ENCODE measurements at regions of chr16 and their contacts with region 1.

Region 1: DNA sequence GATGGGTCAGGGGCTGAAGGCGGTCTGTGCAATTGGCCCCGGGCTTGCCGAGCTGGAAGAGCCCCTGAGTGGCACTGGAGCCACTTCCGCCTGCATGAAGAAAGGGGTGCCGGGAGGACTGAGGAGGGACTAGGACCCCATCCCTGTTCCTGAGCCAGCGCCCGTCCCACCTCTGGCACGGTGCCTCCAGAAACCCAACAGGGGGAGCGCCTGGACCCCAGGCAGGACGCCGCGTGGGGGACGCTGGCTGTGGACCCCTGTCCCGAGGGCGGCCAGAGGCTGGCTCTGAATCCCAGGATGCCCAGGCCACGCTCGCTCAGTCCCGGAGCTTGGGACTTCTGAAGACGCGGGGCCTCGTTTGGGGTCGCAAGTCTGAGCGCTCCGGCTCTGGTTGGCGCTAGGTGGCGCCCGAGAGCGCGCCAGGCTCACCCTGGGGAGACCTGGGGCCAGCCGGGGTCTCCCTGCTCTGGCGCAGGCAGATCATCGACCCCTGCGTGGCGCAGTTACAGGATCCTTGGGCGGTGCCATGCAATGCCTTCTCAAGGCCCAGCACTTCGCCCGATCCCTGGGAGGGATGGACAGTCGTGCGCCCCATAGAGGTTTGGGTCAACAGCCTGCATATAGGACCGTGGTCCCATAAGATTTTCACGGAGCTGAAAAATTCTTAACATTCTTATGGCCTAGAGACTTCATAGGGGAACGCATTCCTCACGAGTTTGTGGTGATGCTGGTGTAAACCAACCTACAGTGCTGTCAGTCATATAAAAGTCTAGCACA is 58.5 kb upstream of the CREBBP start:
- DNase-seq: peak; percentile 59
- H3K4me3 ChIP-seq: peak overlapping the region; percentile 49
- CTCF ChIP-seq: peak; percentile 91

Region 2: GRCh38 chr16:3904875-3905274 is 34.2 kb before region 1 on chr16:
- CTCF ChIA-PET with region 1: no interaction called
- POLR2A ChIA-PET with region 1: no interaction called
- DNase-seq: no peak
- H3K4me3 ChIP-seq: no peak overlapping the region
- CTCF ChIP-seq: no peak

Region 3: GRCh38 chr16:3924763-3925162 is 14.3 kb before region 1 on chr16:
- CTCF ChIA-PET with region 1: interaction called, 23 read pairs
- POLR2A ChIA-PET with region 1: no interaction called
- DNase-seq: no peak
- H3K4me3 ChIP-seq: no peak overlapping the region
- CTCF ChIP-seq: no peak

Region 4: GRCh38 chr16:3950343-3951193 is 11.5 kb after region 1 on chr16:
- CTCF ChIA-PET with region 1: interaction called, 48 read pairs
- POLR2A ChIA-PET with region 1: interaction called, 3 read pairs
- DNase-seq: no peak
- H3K4me3 ChIP-seq: peak overlapping the region; percentile 10; the same call in 1 of the 2 replicates
- CTCF ChIP-seq: no peak

Measured in AG04449 (cell line).